Astrocyte of the cerebellum (primary cell): ENCODE measurements at regions of chr2 and their contacts with region 1.

Region 1: GRCh38 chr2:72214429-72215143 is 66.9 kb upstream of the CYP26B1 start:
- DNase-seq: peak; percentile 16
- H3K4me3 ChIP-seq: no peak overlapping the region
- CTCF ChIP-seq: no peak

Region 2: GRCh38 chr2:71261534-71261933 is 953.1 kb before region 1 on chr2:
- in situ Hi-C with region 1: no loop called
- DNase-seq: no peak
- H3K4me3 ChIP-seq: no peak overlapping the region
- CTCF ChIP-seq: no peak

Region 3: DNA sequence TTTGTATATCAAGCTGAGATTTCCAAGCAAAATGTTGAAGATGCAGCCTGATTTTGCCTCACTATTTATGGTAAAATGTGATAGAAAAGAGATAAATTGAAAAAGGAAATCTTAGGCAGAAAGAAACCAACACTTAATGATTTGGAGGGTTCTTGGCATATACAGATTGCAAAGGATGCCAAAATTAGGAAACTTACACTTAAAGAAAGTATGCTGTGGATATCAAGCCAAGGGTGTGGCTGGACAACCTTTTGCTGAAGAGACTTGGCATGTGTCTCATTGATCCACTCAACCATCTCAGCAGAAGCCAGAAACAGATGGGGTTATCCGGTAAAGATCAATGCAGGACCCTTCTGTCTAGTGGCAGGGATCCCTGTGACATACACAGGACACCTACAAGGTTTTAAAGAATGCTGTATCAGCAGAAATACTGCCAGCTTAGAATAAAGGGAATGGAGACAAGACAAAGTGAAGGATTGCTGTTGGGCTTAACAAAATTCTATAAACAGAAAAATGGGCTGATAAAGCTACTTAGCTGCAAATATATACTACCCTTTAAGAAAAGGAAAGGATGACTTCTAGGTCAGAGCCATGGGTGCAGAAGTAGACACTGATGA is 40.4 kb after region 1 on chr2:
- in situ Hi-C with region 1: loop called (anchors 5 kb)
- DNase-seq: no peak
- H3K4me3 ChIP-seq: no peak overlapping the region
- CTCF ChIP-seq: no peak

Region 4: DNA sequence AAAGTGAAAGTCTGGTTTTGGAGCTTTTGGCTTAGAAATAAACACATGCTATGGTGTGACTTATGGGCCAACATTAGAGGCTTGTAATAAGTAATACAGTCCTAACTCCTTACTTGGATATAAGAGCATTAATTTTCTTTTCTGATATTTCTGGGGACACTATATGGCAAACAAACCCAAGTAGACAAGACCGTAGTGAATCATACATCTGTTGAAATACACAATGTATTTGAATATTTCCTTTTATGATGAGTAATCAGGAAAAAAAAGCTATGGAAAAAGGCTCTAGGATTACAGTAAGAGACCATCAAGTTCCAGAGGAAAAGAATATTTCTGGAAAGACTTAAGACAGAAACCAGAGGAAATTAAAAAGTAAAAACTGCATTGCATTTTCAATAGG is 79.0 kb after region 1 on chr2:
- in situ Hi-C with region 1: no loop called
- DNase-seq: no peak
- H3K4me3 ChIP-seq: no peak overlapping the region
- CTCF ChIP-seq: no peak

Region 5: GRCh38 chr2:72325592-72326422 is 111.2 kb after region 1 on chr2:
- in situ Hi-C with region 1: no loop called
- DNase-seq: no peak
- H3K4me3 ChIP-seq: no peak overlapping the region
- CTCF ChIP-seq: peak; percentile 54